ENCODE measurements at regions of chr18 and their contacts with region 1.

Region 1: DNA sequence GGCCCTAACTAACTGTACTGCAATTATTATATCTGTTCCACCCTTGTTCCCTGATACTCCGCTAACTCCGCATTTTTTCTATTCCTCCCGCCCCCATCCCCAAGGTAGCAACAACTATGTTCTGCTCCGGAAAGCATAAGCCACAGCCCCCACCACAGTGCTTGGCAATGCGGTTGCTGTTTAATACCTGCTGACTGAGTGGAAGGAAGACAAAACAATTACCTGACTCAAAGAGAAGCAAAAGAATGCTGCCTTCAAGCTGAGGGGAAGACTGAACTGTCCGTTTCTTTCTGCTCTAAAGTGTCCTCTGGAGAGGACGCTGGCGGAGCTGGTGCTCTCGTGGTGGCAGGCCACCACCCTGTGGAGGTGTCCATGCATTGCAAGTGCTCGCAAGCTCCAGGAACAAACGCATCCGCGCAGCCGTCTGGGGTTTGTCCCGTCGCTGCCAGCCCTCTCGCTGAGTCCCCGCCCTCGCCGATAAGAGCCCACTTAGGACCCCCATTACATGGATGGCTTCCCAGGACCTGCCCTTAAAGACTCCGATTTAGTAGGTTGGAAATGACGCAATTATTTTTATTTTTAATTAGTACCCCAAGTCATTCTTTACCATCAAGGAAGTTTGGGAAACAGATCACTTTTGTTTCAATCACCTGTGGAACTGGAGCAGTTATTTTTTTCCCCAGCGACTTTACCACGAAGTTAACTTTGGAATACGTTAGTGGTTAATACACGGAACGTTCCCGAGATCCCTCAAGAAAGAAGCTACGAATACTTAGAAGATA is 1.6 kb upstream of the MYL12A start:
- DNase-seq: peak; percentile 91
- H3K4me3 Mint-ChIP-seq: peak overlapping the region; percentile 97
- H3K27ac Mint-ChIP-seq: peak overlapping the region; percentile 98
- H3K4me1 Mint-ChIP-seq: peaks cover 23% of the 10 kb centered on the region
- H3K27me3 Mint-ChIP-seq: no peaks in the 10 kb centered on the region

Region 2: DNA sequence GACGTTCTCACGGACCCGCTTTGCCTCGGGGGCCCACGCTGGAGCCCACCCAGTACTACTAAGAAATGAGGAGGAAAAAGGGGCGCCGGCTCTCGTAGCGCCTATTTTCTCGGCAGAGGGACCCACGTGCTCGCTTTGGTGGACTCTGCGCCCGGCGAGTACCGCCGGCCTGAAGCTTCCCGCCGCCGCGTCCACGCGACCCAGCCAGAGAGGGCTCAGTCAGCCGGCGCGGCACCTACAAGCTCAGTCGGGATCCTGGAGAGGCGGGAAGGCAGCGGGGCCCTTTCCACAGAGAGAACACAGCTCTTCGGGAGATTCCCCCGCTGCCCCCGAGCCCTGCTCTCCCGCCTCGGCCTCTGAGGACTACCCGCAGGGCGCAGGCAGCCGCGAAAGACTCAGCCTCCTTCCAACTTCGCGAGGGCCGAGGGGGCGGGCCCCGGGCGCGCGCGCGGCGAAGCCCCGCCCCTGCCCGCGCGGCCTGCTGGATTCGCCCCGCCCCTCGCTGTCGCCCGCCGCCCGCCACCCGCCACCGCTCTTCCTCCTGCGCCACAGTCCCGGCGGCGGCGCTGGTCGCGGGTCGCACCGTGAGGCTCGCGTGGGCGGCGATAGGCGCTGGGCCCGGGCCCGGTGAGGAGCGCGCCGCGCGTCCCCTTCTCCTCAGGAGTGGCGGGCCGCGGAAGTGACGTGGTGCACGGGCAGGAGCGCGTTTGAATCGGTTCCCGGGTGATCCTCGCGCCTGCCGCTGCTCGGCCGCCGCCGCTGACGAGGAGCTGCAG is 590.7 kb before region 1 on chr18 and contains the start of gene SMCHD1:
- CTCF ChIA-PET with region 1: no interaction called
- POLR2A ChIA-PET with region 1: no interaction called
- intact Hi-C with region 1: loop called (anchors 2 kb)
- DNase-seq: peak; percentile 94
- H3K4me3 Mint-ChIP-seq: peak within 1 kb of the TSS; percentile 91
- H3K27ac Mint-ChIP-seq: peak within 1 kb of the TSS; percentile 97
- H3K4me1 Mint-ChIP-seq: peaks cover 29% of the 10 kb centered on the region
- H3K27me3 Mint-ChIP-seq: no peaks in the 10 kb centered on the region
- total RNA-seq, gene SMCHD1: 86.0 to 94.5 TPM

Region 3: DNA sequence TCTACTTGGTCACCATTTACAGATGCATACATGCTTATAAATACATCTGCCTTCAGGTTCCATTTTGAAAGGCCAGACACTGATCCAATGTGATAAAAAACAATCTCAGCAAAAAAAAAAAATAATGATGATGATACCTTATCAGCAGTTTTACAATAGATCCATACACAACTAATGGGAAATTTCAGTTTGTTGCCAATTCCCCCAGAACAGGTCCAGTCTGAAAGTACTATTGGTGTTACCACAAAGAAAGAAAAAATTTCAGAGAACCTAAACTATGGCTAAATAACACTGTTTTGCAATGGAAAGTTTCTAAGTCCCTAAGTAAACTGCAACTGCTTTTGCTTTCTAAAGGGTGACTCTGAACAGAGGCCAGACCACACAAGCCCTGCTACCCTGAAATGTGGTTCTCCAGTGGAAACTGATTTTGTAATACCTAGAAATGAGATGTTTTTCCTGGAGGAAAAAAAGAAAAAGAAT is 287.2 kb before region 1 on chr18:
- CTCF ChIA-PET with region 1: interaction called, 4 read pairs
- POLR2A ChIA-PET with region 1: interaction called, 3 read pairs
- intact Hi-C with region 1: loop called (anchors 1 kb)
- DNase-seq: peak; percentile 64
- H3K4me3 Mint-ChIP-seq: peak overlapping the region; percentile 62
- H3K27ac Mint-ChIP-seq: peak overlapping the region; percentile 100
- H3K4me1 Mint-ChIP-seq: peaks cover 92% of the 10 kb centered on the region
- H3K27me3 Mint-ChIP-seq: no peaks in the 10 kb centered on the region

Region 4: DNA sequence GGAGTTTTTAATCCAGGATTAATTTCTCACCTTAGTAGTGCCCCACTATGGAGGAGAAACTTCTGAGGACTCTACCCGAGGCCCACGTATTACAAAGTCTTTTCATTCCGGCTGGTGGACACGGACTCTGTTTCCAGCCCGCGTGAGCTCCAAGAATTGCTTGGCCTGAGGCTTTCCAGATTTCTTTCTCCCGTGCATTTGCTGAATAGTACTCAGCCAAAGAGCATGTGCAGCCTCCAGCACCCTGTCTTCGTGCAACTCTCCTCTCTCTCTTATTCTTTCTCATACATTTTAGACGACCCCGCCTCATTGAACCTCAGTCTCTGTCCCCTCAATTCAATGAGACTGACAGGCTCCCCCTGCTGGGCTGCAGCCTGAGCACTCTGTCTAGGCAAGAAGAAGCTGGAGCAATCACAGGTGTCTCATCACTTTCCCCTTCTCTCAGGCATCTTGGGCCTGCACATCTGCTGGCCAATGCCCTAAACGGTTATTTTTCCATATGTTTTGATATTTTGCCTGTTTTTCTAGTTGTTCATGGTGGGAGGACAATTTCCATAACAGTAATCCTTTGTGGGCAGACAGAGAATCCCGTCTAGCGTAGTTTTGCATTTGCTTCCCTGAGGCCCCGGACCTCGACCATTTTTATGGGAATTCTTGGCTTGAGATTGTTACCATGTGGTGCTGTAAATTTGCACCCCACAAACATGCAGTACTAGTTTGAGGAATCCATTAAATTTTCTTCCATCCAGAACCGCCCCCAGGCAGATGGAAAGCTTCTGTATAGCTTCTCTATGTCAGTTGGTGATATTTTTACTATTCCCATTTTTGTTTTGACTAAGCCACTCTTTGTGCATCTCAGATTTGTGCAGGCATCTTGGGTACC is 183.0 kb before region 1 on chr18:
- CTCF ChIA-PET with region 1: interaction called, 31 read pairs
- POLR2A ChIA-PET with region 1: interaction called, 6 read pairs
- intact Hi-C with region 1: loop called (anchors 1 kb)
- DNase-seq: peak; percentile 86
- H3K4me3 Mint-ChIP-seq: peak overlapping the region; percentile 55
- H3K27ac Mint-ChIP-seq: peak overlapping the region; percentile 73
- H3K4me1 Mint-ChIP-seq: peaks cover 68% of the 10 kb centered on the region
- H3K27me3 Mint-ChIP-seq: no peaks in the 10 kb centered on the region

Region 5: GRCh38 chr18:3217948-3218647 is 27.9 kb before region 1 on chr18:
- CTCF ChIA-PET with region 1: interaction called, 13 read pairs
- POLR2A ChIA-PET with region 1: no interaction called
- intact Hi-C with region 1: no loop called
- DNase-seq: no peak
- H3K4me3 Mint-ChIP-seq: no peak overlapping the region
- H3K27ac Mint-ChIP-seq: no peak overlapping the region
- H3K4me1 Mint-ChIP-seq: peaks cover 8% of the 10 kb centered on the region
- H3K27me3 Mint-ChIP-seq: no peaks in the 10 kb centered on the region

Region 6: DNA sequence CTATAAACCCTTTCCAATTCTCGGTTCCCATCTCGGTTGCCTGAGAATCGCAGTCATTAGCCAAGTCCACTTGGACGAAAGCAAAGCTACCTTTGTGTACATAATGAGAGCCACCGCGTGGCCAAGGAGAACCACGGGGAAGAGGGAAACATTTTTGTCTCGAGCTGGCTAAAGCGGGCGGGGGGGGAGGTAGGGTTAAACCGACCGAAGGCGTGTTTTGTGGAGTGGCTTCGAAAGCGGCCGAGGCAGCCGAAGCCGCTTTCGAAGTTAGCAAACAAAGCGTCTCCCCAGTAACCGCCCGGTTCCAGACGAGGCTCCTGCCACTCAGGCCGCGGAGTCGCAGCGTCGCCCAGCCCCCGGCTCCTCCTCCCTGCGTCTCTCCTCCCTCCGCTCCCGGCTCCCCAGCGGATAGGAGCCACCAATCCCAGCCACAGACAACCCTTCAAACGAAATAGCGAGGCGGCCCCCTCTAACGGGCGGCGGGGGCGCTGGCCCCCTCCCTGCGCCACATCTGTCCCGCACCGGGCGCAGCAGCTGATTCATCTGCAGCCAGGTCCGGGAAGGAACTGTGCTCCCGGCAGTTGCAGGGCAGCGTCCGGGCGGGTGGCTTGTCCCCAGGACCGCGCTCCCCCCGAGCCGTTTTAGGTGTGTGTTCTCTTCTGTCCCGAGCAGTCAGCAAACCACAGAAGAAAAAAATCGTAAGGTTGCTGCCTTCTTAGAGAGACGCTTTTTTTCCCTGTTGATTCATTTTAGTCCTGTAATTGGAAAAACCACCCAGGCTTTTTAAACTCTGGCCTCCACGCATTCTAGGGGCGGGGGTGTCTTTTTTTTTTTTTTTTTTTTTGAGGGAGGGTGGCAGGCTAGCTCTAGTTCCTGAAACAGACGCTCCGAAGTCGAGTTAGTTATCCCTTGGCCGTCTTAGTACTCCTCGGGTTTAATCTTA is 202.1 kb after region 1 on chr18:
- CTCF ChIA-PET with region 1: no interaction called
- POLR2A ChIA-PET with region 1: interaction called, 3 read pairs
- intact Hi-C with region 1: loop called (anchors 1 kb)
- DNase-seq: peak; percentile 93
- H3K4me3 Mint-ChIP-seq: peak overlapping the region; percentile 86
- H3K27ac Mint-ChIP-seq: peak overlapping the region; percentile 93
- H3K4me1 Mint-ChIP-seq: peaks cover 25% of the 10 kb centered on the region
- H3K27me3 Mint-ChIP-seq: no peaks in the 10 kb centered on the region

Measured in activated CD4-positive, alpha-beta memory T cell treated with anti-CD3 and anti-CD28 coated beads for 36 hours (primary cell).